ENCODE measurements at regions of chr5 and their contacts with region 1.

Region 1: GRCh38 chr5:141701360-141702119 is 19.5 kb upstream of the ARAP3 start:
- DNase-seq: no peak
- ATAC-seq: peak; percentile 17 to 52; a peak in 3 of 6 replicates
- H3K4me3 ChIP-seq: peak overlapping the region; percentile 39; the same call in 1 of the 3 replicates
- H3K27ac ChIP-seq: no peak overlapping the region
- H3K4me1 ChIP-seq: 0 out of 3 replicates have a peak, but pooled peaks cover 4% of the 10 kb centered on the region
- CTCF ChIP-seq: no peak
- EP300 ChIP-seq: no peak
- POLR2A ChIP-seq: no peak
- RAD21 ChIP-seq: no peak

Region 2: DNA sequence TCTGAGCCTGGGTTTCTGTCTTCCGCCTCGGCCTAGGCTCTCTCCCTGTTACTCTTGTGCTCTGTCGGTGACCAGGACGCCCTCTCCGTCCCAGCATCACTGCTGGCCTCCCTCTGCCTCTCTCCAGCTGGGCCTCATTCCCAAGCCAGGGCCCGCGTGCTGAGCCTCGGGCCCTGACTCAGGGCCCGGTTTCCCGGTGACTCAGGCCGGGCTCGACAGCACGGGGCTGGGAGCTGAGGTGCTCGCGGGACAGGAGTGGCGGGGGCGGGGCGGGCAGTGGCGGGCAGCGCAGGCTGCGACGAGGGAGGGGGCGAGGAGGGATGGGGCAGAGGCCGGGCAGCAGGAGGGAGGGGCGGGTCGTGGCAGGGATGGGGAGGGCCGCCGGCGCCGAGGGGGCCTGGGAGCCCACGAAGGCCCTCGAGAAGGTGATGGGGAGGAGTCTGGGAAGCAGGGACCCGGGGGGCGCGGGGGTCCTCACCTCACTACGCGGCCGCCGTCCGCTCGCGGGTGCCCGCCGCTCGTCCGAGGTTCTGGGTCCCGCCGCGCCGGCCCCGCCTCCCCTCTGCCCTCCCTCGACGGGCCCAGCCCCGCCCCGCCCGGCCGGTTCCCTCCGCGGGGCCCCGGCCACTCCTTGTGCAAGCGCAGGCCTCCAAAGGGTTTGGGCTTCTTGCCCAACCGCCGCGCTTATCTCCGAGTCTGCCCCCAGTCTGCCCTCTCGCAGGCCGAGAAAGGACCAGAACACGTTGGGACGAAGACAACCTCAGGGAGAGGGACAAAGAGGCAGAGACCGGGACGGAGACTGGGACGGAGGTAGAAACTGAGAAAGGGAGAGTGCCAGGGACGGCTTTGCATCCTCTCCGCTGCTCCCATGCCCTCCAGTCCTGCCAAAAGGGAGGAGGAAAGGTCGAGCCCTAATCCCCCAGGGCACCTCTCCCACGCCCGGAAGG is 19.6 kb before region 1 on chr5 and contains the start of gene ARAP3:
- CTCF ChIA-PET with region 1: interaction called, 12 read pairs
- POLR2A ChIA-PET with region 1: no interaction called
- DNase-seq: peak; percentile 69 to 75
- ATAC-seq: peak; percentile 87 to 93
- H3K4me3 ChIP-seq: peak within 1 kb of the TSS; percentile 49
- H3K27ac ChIP-seq: peak within 1 kb of the TSS; percentile 88 to 98
- H3K4me1 ChIP-seq: peaks cover 24% of the 10 kb centered on the region
- CTCF ChIP-seq: no peak
- EP300 ChIP-seq: no peak
- POLR2A ChIP-seq: peak; percentile 40
- RAD21 ChIP-seq: no peak
- polyA plus RNA-seq, gene ARAP3: 3.0 and 4.5 TPM in 2 replicates

Region 3: DNA sequence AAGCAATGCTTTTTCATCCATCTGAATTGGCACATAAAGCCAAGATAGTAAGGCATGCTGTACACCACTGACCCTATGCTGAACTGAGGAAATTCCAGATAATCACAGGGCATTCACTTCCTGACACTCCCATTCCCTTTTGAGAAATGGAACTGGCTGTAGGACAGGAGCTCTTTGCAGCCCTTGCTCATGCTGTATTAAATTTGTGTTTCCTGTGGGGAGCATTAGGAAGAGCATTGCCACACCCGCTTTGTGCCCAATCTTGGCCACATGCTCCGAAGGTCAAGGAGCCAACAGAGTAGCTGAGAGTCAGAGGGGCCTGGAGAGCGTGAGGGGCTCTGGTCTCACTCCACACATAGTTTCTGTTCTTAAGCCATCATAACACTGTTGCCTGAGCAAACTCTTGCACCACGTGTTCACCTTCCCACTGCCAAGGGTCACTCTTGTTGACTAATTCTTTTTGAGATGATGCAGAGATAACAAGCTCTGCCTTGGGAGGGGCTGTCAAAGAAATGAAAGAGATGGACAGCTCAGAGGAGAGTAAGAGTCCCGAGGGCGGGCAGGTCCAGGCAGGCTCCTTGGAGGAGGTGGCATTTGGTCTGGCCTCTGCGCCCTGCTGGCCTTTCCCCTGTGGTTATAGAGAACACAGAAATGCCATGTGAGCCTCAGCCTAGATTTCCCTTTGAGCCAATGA is 12.2 kb after region 1 on chr5:
- CTCF ChIA-PET with region 1: interaction called, 16 read pairs
- POLR2A ChIA-PET with region 1: no interaction called
- DNase-seq: peak in 1 of 2 experiments; percentile 60
- ATAC-seq: peak; percentile 40 to 68; a peak in 5 of 6 replicates
- H3K4me3 ChIP-seq: no peak overlapping the region
- H3K27ac ChIP-seq: peak overlapping the region; percentile 22 to 45; a peak in 4 of 6 replicates
- H3K4me1 ChIP-seq: peaks cover 21% of the 10 kb centered on the region
- CTCF ChIP-seq: no peak
- EP300 ChIP-seq: no peak
- POLR2A ChIP-seq: no peak
- RAD21 ChIP-seq: no peak

Measured in A549 (cell line).